PC-3 (cell line): ENCODE measurements at regions of chr3 and their contacts with region 1.

Region 1: DNA sequence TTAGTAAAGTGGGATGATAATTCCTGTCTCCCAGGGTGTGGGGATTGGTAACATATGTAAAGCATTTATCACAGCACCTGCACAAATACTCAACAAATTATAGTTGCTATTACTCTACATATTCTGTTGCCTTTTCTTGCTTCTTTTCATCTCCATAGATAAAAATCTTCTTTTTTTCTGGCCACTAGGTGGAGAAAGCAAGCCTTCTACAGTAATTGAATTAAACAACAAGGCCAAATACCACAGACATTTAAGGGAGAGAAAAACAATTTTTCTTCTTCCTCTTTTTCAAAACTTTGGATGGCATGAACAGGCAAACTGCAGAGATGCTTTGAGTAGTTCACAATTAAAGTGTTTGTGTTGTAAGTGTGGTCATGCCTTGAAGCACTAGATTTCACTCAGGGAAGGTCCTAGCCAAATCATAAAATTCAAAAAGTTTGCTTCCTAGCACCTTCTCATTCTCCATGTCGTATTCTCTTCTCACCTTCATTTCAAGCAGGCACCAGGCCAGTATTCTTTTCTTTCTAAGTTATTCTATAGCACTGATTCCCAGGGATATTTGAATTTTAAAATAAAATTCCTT is 493.4 kb upstream of the TGFBR2 start:
- DNase-seq: peak; percentile 85
- ATAC-seq: peak; percentile 53
- H3K4me3 ChIP-seq: no peak overlapping the region
- H3K27ac ChIP-seq: no peak overlapping the region
- H3K4me1 ChIP-seq: peaks cover 23% of the 10 kb centered on the region
- H3K27me3 ChIP-seq: no peaks in the 10 kb centered on the region
- CTCF ChIP-seq: peak; percentile 88

Region 2: GRCh38 chr3:29955413-29955812 is 157.6 kb before region 1 on chr3:
- CTCF ChIA-PET with region 1: no interaction called
- POLR2A ChIA-PET with region 1: no interaction called
- intact Hi-C with region 1: no loop called
- DNase-seq: peak; percentile 45
- ATAC-seq: no peak
- H3K4me3 ChIP-seq: no peak overlapping the region
- H3K27ac ChIP-seq: no peak overlapping the region
- H3K4me1 ChIP-seq: no peaks in the 10 kb centered on the region
- H3K27me3 ChIP-seq: no peaks in the 10 kb centered on the region
- CTCF ChIP-seq: no peak

Region 3: DNA sequence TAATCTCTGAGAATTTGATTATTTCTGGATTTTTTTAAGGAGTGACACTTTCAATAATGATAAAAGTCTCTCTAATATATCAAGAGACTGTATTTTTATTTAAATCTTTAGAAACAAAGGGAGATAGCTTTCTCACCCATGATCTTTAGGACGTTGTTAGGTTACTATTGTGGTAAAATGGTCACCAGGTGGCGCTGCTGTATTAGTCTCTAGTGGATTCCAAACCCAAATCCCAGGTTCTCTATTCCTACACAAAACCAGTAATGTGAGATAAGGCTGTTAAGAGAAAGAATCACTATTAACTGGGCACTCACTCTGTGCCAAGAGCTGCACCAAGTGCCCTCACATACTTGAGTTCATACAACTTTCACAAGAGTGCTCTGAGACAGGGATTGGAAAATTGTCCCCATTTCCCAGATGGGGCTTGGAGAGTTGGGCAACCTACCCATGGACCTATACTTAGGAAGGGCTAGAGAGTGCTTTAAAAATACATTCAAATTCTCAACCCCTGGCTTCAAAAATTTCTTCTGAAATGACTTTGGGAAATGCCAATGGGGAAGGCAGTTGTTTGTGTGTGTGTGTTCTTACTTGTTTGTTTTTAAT is 100.0 kb before region 1 on chr3:
- CTCF ChIA-PET with region 1: no interaction called
- POLR2A ChIA-PET with region 1: no interaction called
- intact Hi-C with region 1: loop called (anchors 5 kb)
- DNase-seq: peak; percentile 92
- ATAC-seq: peak; percentile 89
- H3K4me3 ChIP-seq: no peak overlapping the region
- H3K27ac ChIP-seq: no peak overlapping the region
- H3K4me1 ChIP-seq: peaks cover 8% of the 10 kb centered on the region
- H3K27me3 ChIP-seq: no peaks in the 10 kb centered on the region
- CTCF ChIP-seq: peak; percentile 94

Region 4: DNA sequence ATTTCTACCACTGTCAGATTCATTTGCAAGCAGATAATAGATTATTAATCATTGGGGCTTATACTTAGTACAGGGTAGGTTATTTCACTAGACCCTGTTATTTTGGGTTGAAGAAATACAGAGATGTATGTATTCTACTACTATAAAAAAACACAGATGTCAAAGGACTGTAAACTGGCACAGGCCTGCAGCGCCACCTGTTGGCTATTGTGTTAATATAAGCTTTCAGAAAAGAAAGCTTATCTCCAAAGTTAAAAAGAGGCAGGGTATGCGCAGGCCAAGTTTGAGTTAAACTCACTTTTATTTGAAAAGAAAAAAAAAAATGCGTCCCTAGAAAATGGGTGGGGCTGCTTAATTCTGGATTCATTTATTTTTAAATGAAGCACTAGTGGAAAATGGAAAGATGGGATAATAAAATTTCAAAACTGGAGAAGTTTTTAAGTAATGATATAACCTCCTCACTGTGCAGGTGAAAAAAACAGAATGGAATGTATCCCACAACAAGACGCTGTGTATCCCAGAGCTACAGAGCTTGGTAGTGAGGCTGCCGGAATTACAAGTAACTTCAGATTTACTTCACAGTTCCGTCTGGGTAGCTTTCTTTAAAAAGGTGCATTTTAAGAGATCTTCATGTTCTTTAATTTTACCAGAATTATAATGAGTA is 86.2 kb after region 1 on chr3:
- CTCF ChIA-PET with region 1: interaction called, 6 read pairs
- POLR2A ChIA-PET with region 1: no interaction called
- intact Hi-C with region 1: loop called (anchors 1 kb)
- DNase-seq: peak; percentile 77
- ATAC-seq: peak; percentile 59
- H3K4me3 ChIP-seq: no peak overlapping the region
- H3K27ac ChIP-seq: no peak overlapping the region
- H3K4me1 ChIP-seq: no peaks in the 10 kb centered on the region
- H3K27me3 ChIP-seq: no peaks in the 10 kb centered on the region
- CTCF ChIP-seq: peak; percentile 93

Region 5: DNA sequence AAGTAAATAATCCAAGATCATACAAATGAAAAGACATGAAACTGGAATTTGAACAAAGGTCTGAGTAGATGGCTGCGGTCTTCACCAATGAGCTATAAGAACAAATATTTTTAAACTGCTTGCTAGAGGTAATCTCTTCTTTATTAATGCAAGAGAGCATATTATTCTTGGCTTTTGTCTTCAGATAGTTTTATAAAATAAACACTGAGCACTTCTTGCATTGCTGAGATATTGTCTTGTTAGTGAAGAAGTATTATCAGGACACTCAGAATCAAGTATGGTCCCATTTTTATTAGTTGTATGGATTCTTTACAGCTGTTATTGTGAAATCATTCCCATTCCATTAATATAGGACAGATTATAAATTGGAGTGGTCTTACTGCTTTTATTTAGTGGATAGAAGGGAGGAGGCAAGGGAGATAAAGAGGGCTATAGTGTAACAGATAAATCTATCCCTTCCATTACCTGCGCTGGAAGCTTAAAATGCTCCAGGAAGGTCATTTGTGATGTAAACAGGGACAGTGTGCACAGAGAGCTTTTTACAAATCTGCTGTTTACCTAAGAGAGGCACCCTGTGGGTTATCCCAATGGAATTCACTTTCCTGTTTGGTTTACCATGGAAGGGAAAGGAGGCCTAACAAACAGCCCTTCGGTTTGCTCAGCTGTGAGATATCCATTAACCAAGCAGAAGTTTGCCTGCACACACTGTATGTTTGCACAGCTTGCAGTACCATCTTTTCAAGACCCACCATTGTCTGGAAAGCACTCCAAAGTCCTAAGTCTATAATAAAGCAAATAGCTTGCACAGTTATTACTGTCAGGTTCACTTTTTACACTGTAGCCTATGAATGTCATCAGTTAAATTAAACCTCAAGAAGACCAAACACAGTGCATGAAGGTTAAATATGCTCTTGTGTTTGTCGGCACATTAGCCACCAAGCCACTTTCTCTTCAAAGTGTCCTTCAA is 145.7 kb after region 1 on chr3:
- CTCF ChIA-PET with region 1: no interaction called
- POLR2A ChIA-PET with region 1: no interaction called
- intact Hi-C with region 1: no loop called
- DNase-seq: peak; percentile 76
- ATAC-seq: peak; percentile 92
- H3K4me3 ChIP-seq: no peak overlapping the region
- H3K27ac ChIP-seq: peak overlapping the region; percentile 29
- H3K4me1 ChIP-seq: peaks cover 16% of the 10 kb centered on the region; the same call in 1 of the 2 replicates
- H3K27me3 ChIP-seq: no peaks in the 10 kb centered on the region
- CTCF ChIP-seq: no peak

Region 6: DNA sequence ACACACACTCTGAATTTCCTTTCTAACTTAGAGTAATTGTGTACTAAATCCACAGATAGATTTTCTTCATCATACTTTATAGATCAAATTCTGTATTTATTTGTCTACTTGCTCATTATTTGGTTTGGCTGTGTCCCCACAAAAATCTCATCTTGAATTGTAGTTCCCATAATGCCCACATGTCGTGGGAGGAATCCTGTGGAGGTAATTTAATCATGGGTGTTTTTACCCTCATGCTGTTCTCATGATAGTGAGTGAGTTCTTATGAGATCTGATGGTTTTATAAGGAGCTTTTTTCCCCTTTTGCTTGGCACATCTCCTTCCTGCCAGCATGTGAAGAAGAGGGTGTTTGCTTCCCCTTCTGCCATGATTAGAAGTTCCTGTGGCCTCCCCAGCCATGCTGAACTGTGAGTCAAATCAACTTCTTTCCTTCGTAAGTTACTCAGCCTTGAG is 295.1 kb after region 1 on chr3:
- CTCF ChIA-PET with region 1: no interaction called
- POLR2A ChIA-PET with region 1: no interaction called
- intact Hi-C with region 1: loop called (anchors 5 kb)
- DNase-seq: peak; percentile 93
- ATAC-seq: peak; percentile 87
- H3K4me3 ChIP-seq: peak overlapping the region; percentile 24; the same call in 1 of the 2 replicates
- H3K27ac ChIP-seq: peak overlapping the region; percentile 93
- H3K4me1 ChIP-seq: peaks cover 19% of the 10 kb centered on the region
- H3K27me3 ChIP-seq: no peaks in the 10 kb centered on the region
- CTCF ChIP-seq: peak; percentile 50

Region 7: DNA sequence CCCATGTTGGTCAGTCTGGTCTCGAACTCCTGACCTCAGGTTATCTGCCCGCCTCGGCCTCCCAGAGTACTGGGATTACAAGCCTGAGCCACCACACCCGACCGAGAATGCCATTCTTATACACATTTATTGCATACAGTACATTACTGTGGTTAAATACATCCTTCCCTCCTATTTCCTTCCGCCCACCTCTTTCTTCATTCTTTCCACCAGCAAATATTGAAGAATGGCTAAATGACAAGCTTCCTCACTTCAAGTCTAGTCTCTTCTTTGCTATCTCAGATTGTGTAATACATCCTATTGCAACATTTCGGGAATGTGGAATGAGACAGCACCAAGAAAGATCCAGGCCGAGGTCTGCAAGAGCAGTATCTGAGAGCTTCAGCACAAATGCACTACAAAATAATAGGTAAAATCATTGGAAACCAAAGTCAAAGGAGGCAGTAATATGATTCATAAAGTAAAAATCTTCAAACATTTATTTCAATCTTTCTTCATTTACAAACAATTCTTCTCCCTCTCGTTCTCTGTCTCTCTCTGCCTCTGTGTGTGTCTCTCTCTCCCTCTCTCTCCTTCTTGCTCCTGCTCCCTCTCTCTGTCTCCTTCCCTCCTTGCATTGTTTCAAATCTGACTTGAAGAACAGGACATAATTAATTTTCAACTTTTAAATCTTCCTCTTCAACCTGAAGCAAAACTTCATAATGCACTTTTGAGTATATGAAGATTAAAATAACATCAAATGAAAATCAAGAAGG is 398.7 kb after region 1 on chr3:
- CTCF ChIA-PET with region 1: no interaction called
- POLR2A ChIA-PET with region 1: no interaction called
- intact Hi-C with region 1: loop called (anchors 10 kb)
- DNase-seq: peak; percentile 98
- ATAC-seq: peak; percentile 74
- H3K4me3 ChIP-seq: no peak overlapping the region
- H3K27ac ChIP-seq: peak overlapping the region; percentile 71
- H3K4me1 ChIP-seq: peaks cover 43% of the 10 kb centered on the region
- H3K27me3 ChIP-seq: no peaks in the 10 kb centered on the region
- CTCF ChIP-seq: no peak

Region 8: GRCh38 chr3:30751610-30752299 is 638.8 kb after region 1 on chr3:
- CTCF ChIA-PET with region 1: no interaction called
- POLR2A ChIA-PET with region 1: no interaction called
- intact Hi-C with region 1: loop called (anchors 1 kb)
- DNase-seq: peak; percentile 62
- ATAC-seq: peak; percentile 12; the same call in 1 of the 2 replicates
- H3K4me3 ChIP-seq: no peak overlapping the region
- H3K27ac ChIP-seq: no peak overlapping the region
- H3K4me1 ChIP-seq: peaks cover 44% of the 10 kb centered on the region
- H3K27me3 ChIP-seq: no peaks in the 10 kb centered on the region
- CTCF ChIP-seq: peak; percentile 68